ENCODE measurements at regions of chr9 and their contacts with region 1.

Region 1: DNA sequence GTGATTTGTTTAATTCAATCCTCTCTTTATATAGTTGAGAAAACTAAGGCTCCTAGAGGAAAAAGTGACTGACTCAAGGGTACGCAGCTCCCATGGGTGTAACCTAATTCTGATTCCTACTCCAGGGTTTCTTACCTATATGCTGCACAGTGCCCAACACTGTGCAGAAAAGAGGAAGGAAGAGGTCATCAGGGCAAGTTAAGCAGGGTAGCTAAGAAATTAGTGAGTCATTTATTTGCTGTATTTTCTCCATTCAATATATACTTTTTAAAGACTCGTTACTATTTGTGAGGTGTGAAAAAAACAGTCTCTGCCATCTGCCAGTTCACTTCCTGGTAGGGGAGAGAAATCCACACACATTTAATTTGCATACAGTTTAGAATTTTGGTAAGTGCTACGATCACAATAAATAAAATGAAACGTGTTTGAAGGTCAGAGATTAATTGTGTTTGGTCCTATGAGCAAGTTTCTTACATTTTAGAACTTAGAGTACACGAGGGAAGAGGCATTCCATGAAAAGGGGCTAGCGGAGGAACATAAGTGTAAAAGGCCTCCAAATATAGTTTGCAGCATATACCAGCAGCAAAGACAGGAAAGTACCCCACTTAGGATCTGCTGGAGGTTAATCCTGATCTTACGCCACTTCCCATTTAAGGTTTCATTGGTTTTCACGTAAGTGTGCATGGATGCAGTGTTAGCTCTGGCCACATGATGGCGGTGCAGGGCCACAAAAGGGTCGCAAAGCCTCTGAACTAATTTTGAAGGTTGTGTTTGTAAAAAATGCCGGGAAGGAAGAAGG is 59.9 kb upstream of the TLR4 start:
- DNase-seq: peak; percentile 7
- ATAC-seq: peak; percentile 57
- H3K4me3 ChIP-seq: no peak overlapping the region
- H3K27ac ChIP-seq: no peak overlapping the region
- H3K4me1 ChIP-seq: no peaks in the 10 kb centered on the region
- H3K27me3 ChIP-seq: no peaks in the 10 kb centered on the region
- CTCF ChIP-seq: peak; percentile 33 to 92 (median 85); a peak in 5 of 6 replicates
- POLR2A ChIP-seq: no peak
- RAD21 ChIP-seq: peak; percentile 77

Region 2: GRCh38 chr9:116589392-116590354 is 1054.7 kb before region 1 on chr9:
- CTCF ChIA-PET with region 1: no interaction called
- POLR2A ChIA-PET with region 1: no interaction called
- RAD21 ChIA-PET with region 1: no interaction called
- intact Hi-C with region 1: no loop called
- DNase-seq: peak; percentile 72
- ATAC-seq: peak; percentile 99
- H3K4me3 ChIP-seq: no peak overlapping the region
- H3K27ac ChIP-seq: no peak overlapping the region
- H3K4me1 ChIP-seq: peaks cover 0 to 4% of the 10 kb centered on the region in 2 experiments; a peak in 1 of 4 replicates
- H3K27me3 ChIP-seq: no peaks in the 10 kb centered on the region
- CTCF ChIP-seq: peak; percentile 80 to 97 (median 95)
- POLR2A ChIP-seq: no peak
- RAD21 ChIP-seq: peak; percentile 71

Region 3: GRCh38 chr9:117334101-117334500 is 310.2 kb before region 1 on chr9:
- CTCF ChIA-PET with region 1: no interaction called
- POLR2A ChIA-PET with region 1: no interaction called
- RAD21 ChIA-PET with region 1: no interaction called
- intact Hi-C with region 1: no loop called
- DNase-seq: no peak
- ATAC-seq: no peak
- H3K4me3 ChIP-seq: no peak overlapping the region
- H3K27ac ChIP-seq: no peak overlapping the region
- H3K4me1 ChIP-seq: no peaks in the 10 kb centered on the region
- H3K27me3 ChIP-seq: no peaks in the 10 kb centered on the region
- CTCF ChIP-seq: no peak
- POLR2A ChIP-seq: no peak
- RAD21 ChIP-seq: no peak

Region 4: DNA sequence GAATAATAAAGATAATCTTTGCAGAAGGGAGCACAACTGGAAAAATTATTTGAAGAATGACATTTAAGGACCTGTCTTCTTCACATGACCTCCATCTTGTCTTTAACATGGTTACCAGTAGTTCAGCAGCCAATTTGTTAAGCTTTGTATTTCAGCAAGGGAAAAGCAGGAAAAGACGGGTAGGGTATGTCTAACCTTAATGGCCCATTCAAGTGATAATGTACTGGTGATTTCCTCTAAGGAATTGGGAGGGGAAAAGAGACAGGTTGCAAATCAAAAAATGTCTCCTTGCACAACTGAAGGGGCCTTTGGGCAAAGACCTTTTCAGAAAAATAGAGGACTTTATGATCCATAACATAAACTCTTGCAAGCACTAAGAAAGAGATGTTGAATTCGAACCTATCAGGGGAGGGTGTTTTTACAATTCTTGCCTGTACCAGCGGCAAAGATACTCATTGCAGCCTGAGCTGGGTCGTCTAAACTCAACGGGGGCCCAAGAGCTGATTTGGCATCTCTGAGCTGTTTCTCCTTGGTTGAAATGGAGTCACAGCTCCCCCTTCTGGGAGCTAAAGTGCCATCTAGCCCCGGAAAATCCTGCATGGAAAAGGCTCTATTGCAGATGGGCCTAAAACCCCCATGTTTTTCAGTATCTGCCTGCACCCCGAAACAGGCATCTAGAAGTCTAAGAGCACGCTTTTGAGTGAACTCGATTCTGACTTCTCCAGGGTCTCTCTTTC is 1721.1 kb after region 1 on chr9:
- CTCF ChIA-PET with region 1: no interaction called
- POLR2A ChIA-PET with region 1: no interaction called
- RAD21 ChIA-PET with region 1: no interaction called
- intact Hi-C with region 1: loop called (anchors 10 kb)
- DNase-seq: no peak
- ATAC-seq: no peak
- H3K4me3 ChIP-seq: no peak overlapping the region
- H3K27ac ChIP-seq: no peak overlapping the region
- H3K4me1 ChIP-seq: no peaks in the 10 kb centered on the region
- H3K27me3 ChIP-seq: no peaks in the 10 kb centered on the region
- CTCF ChIP-seq: peak in 2 of 3 experiments; percentile 7 to 31; a peak in 3 of 6 replicates
- POLR2A ChIP-seq: no peak
- RAD21 ChIP-seq: peak; percentile 20; the same call in 1 of the 2 replicates

Measured in HCT116 (cell line).